ENCODE measurements at regions of chr3 and their contacts with region 1.

Region 1: GRCh38 chr3:108914774-108915641 is 38.7 kb downstream of the GUCA1C start:
- DNase-seq: peak; percentile 40 to 86 (median 52)
- ATAC-seq: peak; percentile 97
- H3K4me3 ChIP-seq: no peak overlapping the region
- H3K4me3 Mint-ChIP-seq: peak overlapping the region; percentile 52
- H3K27ac ChIP-seq: no peak overlapping the region
- H3K27ac Mint-ChIP-seq: no peak overlapping the region
- H3K4me1 ChIP-seq: peaks cover 6% of the 10 kb centered on the region
- H3K4me1 Mint-ChIP-seq: peaks cover 17% of the 10 kb centered on the region
- H3K27me3 ChIP-seq: no peaks in the 10 kb centered on the region
- H3K27me3 Mint-ChIP-seq: no peaks in the 10 kb centered on the region
- CTCF ChIP-seq: peak; percentile 88

Region 2: DNA sequence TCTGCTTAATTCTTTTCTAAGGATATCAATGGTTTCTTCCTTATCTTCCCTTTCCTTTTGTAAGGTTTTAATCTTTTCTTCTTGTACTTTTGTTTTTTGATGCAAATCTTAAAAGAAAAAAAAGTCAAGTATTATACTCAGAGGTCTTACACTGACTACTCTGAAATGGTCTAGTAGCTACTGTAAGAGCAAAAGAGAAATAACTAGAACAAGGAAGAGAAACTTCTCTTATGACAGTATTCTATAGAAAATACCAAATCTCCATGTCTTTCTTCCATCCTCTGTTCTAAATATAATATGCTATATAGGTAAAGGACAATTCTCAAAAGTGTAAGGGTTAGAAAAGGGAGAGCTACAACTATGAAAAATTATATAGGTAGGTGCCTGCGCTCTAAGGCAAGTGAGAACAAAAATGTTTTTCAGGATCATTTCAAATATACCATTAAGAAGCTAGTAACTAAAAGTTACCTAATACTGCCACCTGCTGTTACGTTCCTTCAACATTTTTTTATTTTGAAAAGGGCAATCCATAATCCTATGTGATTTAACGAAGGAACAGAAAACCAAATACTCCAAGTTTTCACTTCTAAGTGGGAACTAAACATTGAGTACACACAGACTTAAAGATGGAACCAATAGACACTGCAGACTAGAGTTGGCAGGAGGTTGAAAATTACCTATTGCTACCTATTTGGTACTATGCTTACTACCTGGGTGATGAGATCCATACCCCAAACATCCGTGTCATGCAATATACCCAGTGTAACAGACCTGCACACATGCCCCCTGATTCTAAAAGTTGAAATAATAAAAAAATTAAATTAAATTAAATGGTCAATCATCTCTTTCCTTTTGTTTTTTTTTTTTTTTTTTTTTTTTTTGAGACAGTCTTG is 362.5 kb before region 1 on chr3:
- CTCF ChIA-PET with region 1: interaction called, 4 read pairs
- POLR2A ChIA-PET with region 1: no interaction called
- intact Hi-C with region 1: loop called in 1 of 2 experiments (anchors 5 kb)
- DNase-seq: peak in 4 of 14 experiments; percentile 9 to 68 (median 62)
- ATAC-seq: no peak
- H3K4me3 ChIP-seq: no peak overlapping the region
- H3K4me3 Mint-ChIP-seq: no peak overlapping the region
- H3K27ac ChIP-seq: no peak overlapping the region
- H3K27ac Mint-ChIP-seq: no peak overlapping the region
- H3K4me1 ChIP-seq: no peaks in the 10 kb centered on the region
- H3K4me1 Mint-ChIP-seq: no peaks in the 10 kb centered on the region
- H3K27me3 ChIP-seq: no peaks in the 10 kb centered on the region
- H3K27me3 Mint-ChIP-seq: no peaks in the 10 kb centered on the region
- CTCF ChIP-seq: peak; percentile 62

Region 3: GRCh38 chr3:108662130-108662738 is 252.8 kb before region 1 on chr3:
- CTCF ChIA-PET with region 1: interaction called, 31 read pairs
- POLR2A ChIA-PET with region 1: interaction called, 15 read pairs
- intact Hi-C with region 1: loop called (anchors 1 kb)
- DNase-seq: peak in 11 of 14 experiments; percentile 5 to 87 (median 40)
- ATAC-seq: peak; percentile 81
- H3K4me3 ChIP-seq: no peak overlapping the region
- H3K4me3 Mint-ChIP-seq: no peak overlapping the region
- H3K27ac ChIP-seq: no peak overlapping the region
- H3K27ac Mint-ChIP-seq: no peak overlapping the region
- H3K4me1 ChIP-seq: no peaks in the 10 kb centered on the region
- H3K4me1 Mint-ChIP-seq: peaks cover 20% of the 10 kb centered on the region
- H3K27me3 ChIP-seq: no peaks in the 10 kb centered on the region
- H3K27me3 Mint-ChIP-seq: no peaks in the 10 kb centered on the region
- CTCF ChIP-seq: peak; percentile 90

Region 4: GRCh38 chr3:108667312-108667711 is 247.7 kb before region 1 on chr3:
- CTCF ChIA-PET with region 1: interaction called, 31 read pairs
- POLR2A ChIA-PET with region 1: interaction called, 15 read pairs
- intact Hi-C with region 1: loop called (anchors 1 kb)
- DNase-seq: no peak
- ATAC-seq: no peak
- H3K4me3 ChIP-seq: no peak overlapping the region
- H3K4me3 Mint-ChIP-seq: no peak overlapping the region
- H3K27ac ChIP-seq: no peak overlapping the region
- H3K27ac Mint-ChIP-seq: no peak overlapping the region
- H3K4me1 ChIP-seq: no peaks in the 10 kb centered on the region
- H3K4me1 Mint-ChIP-seq: peaks cover 20% of the 10 kb centered on the region
- H3K27me3 ChIP-seq: no peaks in the 10 kb centered on the region
- H3K27me3 Mint-ChIP-seq: no peaks in the 10 kb centered on the region
- CTCF ChIP-seq: no peak

Region 5: GRCh38 chr3:108757404-108757982 is 157.5 kb before region 1 on chr3 and contains the start of gene RETNLB:
- CTCF ChIA-PET with region 1: no interaction called
- POLR2A ChIA-PET with region 1: no interaction called
- intact Hi-C with region 1: loop called in 1 of 2 experiments (anchors 5 kb)
- DNase-seq: no peak
- ATAC-seq: no peak
- H3K4me3 ChIP-seq: no peak within 1 kb of the TSS
- H3K4me3 Mint-ChIP-seq: no peak within 1 kb of the TSS
- H3K27ac ChIP-seq: no peak within 1 kb of the TSS
- H3K27ac Mint-ChIP-seq: no peak within 1 kb of the TSS
- H3K4me1 ChIP-seq: no peaks in the 10 kb centered on the region
- H3K4me1 Mint-ChIP-seq: peaks cover 12% of the 10 kb centered on the region
- H3K27me3 ChIP-seq: no peaks in the 10 kb centered on the region
- H3K27me3 Mint-ChIP-seq: no peaks in the 10 kb centered on the region
- CTCF ChIP-seq: no peak
- total RNA-seq, gene RETNLB: not detected

Region 6: GRCh38 chr3:108818404-108818803 is 96.6 kb before region 1 on chr3:
- CTCF ChIA-PET with region 1: interaction called, 16 read pairs
- POLR2A ChIA-PET with region 1: interaction called, 3 read pairs
- intact Hi-C with region 1: loop called (anchors 1 to 5 kb)
- DNase-seq: peak; percentile 31 to 87 (median 54)
- ATAC-seq: peak; percentile 92
- H3K4me3 ChIP-seq: no peak overlapping the region
- H3K4me3 Mint-ChIP-seq: peak overlapping the region; percentile 8
- H3K27ac ChIP-seq: no peak overlapping the region
- H3K27ac Mint-ChIP-seq: peak overlapping the region; percentile 29
- H3K4me1 ChIP-seq: peaks cover 22% of the 10 kb centered on the region
- H3K4me1 Mint-ChIP-seq: peaks cover 26% of the 10 kb centered on the region
- H3K27me3 ChIP-seq: no peaks in the 10 kb centered on the region
- H3K27me3 Mint-ChIP-seq: no peaks in the 10 kb centered on the region
- CTCF ChIP-seq: peak; percentile 80

Measured in CD4-positive, alpha-beta T cell (primary cell).